Right lobe of liver (tissue), 6 donors: ENCODE measurements at regions of chr21 and their contacts with region 1.

Region 1: GRCh38 chr21:29481641-29482040 is 182.9 kb downstream of the BACH1 start:
- DNase-seq: no peak
- ATAC-seq: no peak
- H3K4me3 ChIP-seq: no peak overlapping the region
- H3K27ac ChIP-seq: no peak overlapping the region
- H3K4me1 ChIP-seq: no peaks in the 10 kb centered on the region
- H3K27me3 ChIP-seq: no peaks in the 10 kb centered on the region
- CTCF ChIP-seq: no peak
- POLR2A ChIP-seq: no peak

Region 2: GRCh38 chr21:29418813-29419212 is 62.8 kb before region 1 on chr21:
- intact Hi-C with region 1: no loop called
- DNase-seq: no peak
- ATAC-seq: no peak
- H3K4me3 ChIP-seq: no peak overlapping the region
- H3K27ac ChIP-seq: no peak overlapping the region
- H3K4me1 ChIP-seq: no peaks in the 10 kb centered on the region
- H3K27me3 ChIP-seq: no peaks in the 10 kb centered on the region
- CTCF ChIP-seq: no peak
- POLR2A ChIP-seq: no peak

Region 3: GRCh38 chr21:29849735-29850176 is 368.1 kb after region 1 on chr21:
- intact Hi-C with region 1: loop called in 1 of 2 experiments (anchors 10 kb)
- DNase-seq: peak in 2 of 3 donors; percentile 26 to 55
- ATAC-seq: peak; percentile 99 to 100 (median 99)
- H3K4me3 ChIP-seq: no peak overlapping the region
- H3K27ac ChIP-seq: no peak overlapping the region
- H3K4me1 ChIP-seq: peaks cover 0 to 7% (median 3%) of the 10 kb centered on the region in 4 donors
- H3K27me3 ChIP-seq: no peaks in the 10 kb centered on the region
- CTCF ChIP-seq: peak; percentile 68 to 82 (median 77)
- POLR2A ChIP-seq: no peak